Activated T-helper 1 cell treated with anti-CD3 and anti-CD28 coated beads, Interleukin-12 subunit alpha, Interleukin-12 subunit beta, Interleukin-2, Interleukin-4 antibody, amounts not matched to agents 30 ng/mL and 10 ng/mL and 1 ng/mL, durations not matched to agents 14 hours and 24 hours and 36 hours (primary cell): ENCODE measurements at regions of chr13 and their contacts with region 1.

Region 1: GRCh38 chr13:23579072-23579895 is 9.1 kb downstream of the TNFRSF19 start:
- DNase-seq: peak; percentile 87
- H3K4me3 Mint-ChIP-seq: peak overlapping the region; percentile 79
- H3K27ac Mint-ChIP-seq: no peak overlapping the region
- H3K4me1 Mint-ChIP-seq: peaks cover 24% of the 10 kb centered on the region
- H3K27me3 Mint-ChIP-seq: peaks cover 59% of the 10 kb centered on the region

Region 2: GRCh38 chr13:21603531-21604448 is 1975.5 kb before region 1 on chr13 and contains the start of gene MICU2:
- intact Hi-C with region 1: loop called (anchors 5 kb)
- DNase-seq: peak; percentile 94
- H3K4me3 Mint-ChIP-seq: peak within 1 kb of the TSS; percentile 85
- H3K27ac Mint-ChIP-seq: peak within 1 kb of the TSS; percentile 88
- H3K4me1 Mint-ChIP-seq: peaks cover 24% of the 10 kb centered on the region
- H3K27me3 Mint-ChIP-seq: peaks cover 24% of the 10 kb centered on the region
- total RNA-seq, gene MICU2: 32.5 and 33.8 TPM in 2 replicates

Region 3: GRCh38 chr13:21735701-21736401 is 1843.4 kb before region 1 on chr13:
- intact Hi-C with region 1: no loop called
- DNase-seq: no peak
- H3K4me3 Mint-ChIP-seq: no peak overlapping the region
- H3K27ac Mint-ChIP-seq: no peak overlapping the region
- H3K4me1 Mint-ChIP-seq: no peaks in the 10 kb centered on the region
- H3K27me3 Mint-ChIP-seq: peaks cover 9% of the 10 kb centered on the region

Region 4: DNA sequence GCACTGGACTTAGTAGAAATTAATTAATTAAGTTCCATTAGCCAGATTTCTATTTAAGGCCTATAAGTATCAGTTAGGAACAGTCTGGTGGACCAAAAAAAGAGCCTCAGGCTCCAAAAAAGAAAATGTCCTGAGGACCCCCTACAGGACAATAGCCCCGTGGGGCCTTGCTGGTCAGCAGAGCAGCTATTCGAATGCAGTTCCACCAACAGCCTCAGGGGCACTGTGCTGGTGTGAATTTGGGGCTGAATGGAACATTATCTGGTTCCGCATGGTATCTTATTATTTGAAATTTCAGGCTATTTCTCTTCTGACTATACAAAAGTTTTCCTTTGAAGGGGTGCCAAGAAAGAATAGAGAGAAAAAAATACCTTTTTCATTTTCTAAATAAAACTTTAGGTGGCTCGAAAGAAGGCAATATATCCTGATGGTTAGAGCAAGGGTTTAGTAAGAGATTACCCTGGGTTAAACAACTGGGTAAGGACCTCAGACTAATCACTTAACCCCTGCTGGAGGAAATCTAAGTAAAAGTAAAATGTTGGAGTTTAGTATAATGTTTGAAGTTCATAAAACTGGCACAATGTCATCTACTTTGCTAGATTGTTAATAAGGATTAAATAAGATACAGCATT is 162.7 kb after region 1 on chr13:
- intact Hi-C with region 1: loop called (anchors 1 kb)
- DNase-seq: no peak
- H3K4me3 Mint-ChIP-seq: no peak overlapping the region
- H3K27ac Mint-ChIP-seq: no peak overlapping the region
- H3K4me1 Mint-ChIP-seq: peaks cover 27% of the 10 kb centered on the region
- H3K27me3 Mint-ChIP-seq: peaks cover 10% of the 10 kb centered on the region

Region 5: GRCh38 chr13:23888658-23889614 is 309.7 kb after region 1 on chr13 and contains the start of gene MIPEP:
- intact Hi-C with region 1: loop called (anchors 1 kb)
- DNase-seq: peak; percentile 86
- H3K4me3 Mint-ChIP-seq: peak within 1 kb of the TSS; percentile 89
- H3K27ac Mint-ChIP-seq: peak within 1 kb of the TSS; percentile 90
- H3K4me1 Mint-ChIP-seq: peaks cover 31% of the 10 kb centered on the region
- H3K27me3 Mint-ChIP-seq: no peaks in the 10 kb centered on the region
- total RNA-seq, gene MIPEP: 7.3 and 7.8 TPM in 2 replicates

Region 6: DNA sequence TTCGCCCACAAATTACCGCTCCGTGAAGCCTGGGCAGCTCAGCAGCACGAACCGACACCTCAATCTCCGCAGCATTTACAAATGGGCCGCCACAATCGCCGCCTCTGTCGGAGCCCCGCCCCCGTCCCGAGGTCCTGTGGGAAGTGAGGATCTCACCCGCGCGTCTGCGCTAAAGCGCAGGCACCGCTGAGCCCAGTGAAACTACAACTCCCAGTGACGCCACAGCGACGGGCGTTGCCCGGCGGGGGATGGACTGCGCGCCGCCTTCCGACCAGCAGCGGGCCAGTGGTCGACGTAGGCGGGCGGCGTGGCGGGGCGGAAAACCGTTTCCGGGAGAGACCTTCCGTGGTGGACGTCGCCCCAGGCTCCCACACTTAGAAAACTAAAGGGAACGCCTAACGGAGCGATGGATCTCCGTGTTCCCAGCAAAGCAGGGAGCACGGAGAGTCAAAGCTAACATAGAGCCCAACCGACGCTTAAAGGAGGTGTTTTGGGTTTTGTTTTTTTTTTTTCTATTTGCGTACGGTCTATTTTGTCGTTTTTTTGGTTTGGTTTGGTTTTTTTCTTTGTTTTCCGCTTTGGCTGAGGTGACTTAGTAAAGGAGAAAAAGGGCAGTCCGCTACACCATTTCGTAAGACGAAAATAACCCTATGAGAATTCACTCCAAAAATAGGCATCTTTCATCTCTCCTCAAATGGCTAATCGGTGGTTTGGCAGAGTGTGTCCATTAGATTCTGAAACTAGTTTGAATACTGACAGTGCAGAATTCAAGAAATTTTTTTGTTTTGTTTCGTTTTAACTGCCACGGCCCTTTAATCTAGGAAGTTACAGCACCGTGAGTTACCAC is 1343.7 kb after region 1 on chr13:
- intact Hi-C with region 1: loop called (anchors 5 kb)
- DNase-seq: peak; percentile 95
- H3K4me3 Mint-ChIP-seq: peak overlapping the region; percentile 95
- H3K27ac Mint-ChIP-seq: peak overlapping the region; percentile 92
- H3K4me1 Mint-ChIP-seq: peaks cover 14% of the 10 kb centered on the region
- H3K27me3 Mint-ChIP-seq: peaks cover 2% of the 10 kb centered on the region